Spleen (tissue), 13 donors: ENCODE measurements at regions of chr10 and their contacts with region 1.

Region 1: GRCh38 chr10:74262856-74263255 is 111.8 kb downstream of the ADK start:
- DNase-seq: no peak
- H3K4me3 ChIP-seq: no peak overlapping the region
- H3K27ac ChIP-seq: no peak overlapping the region
- H3K4me1 ChIP-seq: peaks cover 0 to 27% (median 3%) of the 10 kb centered on the region in 6 donors
- H3K27me3 ChIP-seq: no peaks in the 10 kb centered on the region
- CTCF ChIP-seq: no peak
- POLR2A ChIP-seq: no peak

Region 2: GRCh38 chr10:75019370-75019769 is 756.5 kb after region 1 on chr10:
- intact Hi-C with region 1: loop called (anchors 5 kb)
- DNase-seq: no peak
- H3K4me3 ChIP-seq: no peak overlapping the region
- H3K27ac ChIP-seq: no peak overlapping the region
- H3K4me1 ChIP-seq: peaks cover 2 to 49% (median 17%) of the 10 kb centered on the region in 6 donors
- H3K27me3 ChIP-seq: no peaks in the 10 kb centered on the region
- CTCF ChIP-seq: peak in 5 of 11 experiments; percentile 16 to 46 (median 42)
- POLR2A ChIP-seq: no peak

Region 3: DNA sequence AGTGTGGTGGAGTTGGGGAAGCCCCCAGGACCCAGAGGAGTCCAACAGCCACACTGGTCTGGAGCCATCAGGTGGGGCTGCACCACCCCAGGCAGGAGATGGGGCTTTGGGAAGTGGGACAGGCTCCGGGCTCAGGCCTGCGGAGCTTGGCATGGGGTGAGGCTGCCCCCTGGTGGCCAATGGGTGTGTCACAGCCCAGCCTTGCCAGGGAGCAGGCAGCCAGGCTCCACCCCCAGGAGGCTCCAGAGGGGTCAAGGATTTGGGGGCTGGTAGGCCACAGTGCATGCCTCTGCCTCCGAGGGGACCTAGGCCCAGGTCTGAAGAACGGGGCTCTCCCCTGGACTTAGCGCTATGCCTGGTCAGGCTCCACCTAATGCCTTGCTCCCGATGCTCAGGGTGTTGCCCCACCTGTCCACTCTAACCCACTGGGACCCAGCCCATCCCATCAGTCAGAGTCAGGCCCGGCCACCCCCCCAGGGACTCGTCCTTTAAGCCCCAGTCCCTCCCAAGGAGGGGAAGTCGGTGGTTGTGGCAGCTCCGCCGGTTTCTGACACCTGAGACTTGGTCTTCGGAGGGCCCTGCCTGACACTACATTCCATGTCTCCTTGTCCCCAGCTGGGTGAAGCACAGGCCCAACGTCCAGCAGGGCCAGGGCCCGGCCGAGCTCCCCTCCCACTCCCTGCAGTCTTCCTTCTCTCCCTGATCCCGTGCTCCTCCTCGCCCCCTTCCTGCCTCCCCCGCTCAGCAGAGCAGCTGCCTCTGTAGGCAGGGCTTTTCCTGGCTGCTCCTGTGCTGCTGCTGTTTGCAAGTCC is 837.3 kb after region 1 on chr10:
- intact Hi-C with region 1: loop called (anchors 5 kb)
- DNase-seq: peak; percentile 95
- H3K4me3 ChIP-seq: no peak overlapping the region
- H3K27ac ChIP-seq: peak overlapping the region in 6 of 8 donors; percentile 11 to 58 (median 50)
- H3K4me1 ChIP-seq: peaks cover 0 to 22% (median 10%) of the 10 kb centered on the region in 6 donors
- H3K27me3 ChIP-seq: no peaks in the 10 kb centered on the region
- CTCF ChIP-seq: peak; percentile 92 to 99 (median 98)
- POLR2A ChIP-seq: no peak